ENCODE measurements at regions of chr20 and their contacts with region 1.

Region 1: GRCh38 chr20:10090588-10091166 is 55.9 kb downstream of the ANKEF1 start:
- DNase-seq: peak; percentile 58
- H3K4me3 ChIP-seq: no peak overlapping the region
- H3K27ac ChIP-seq: no peak overlapping the region
- H3K4me1 ChIP-seq: peaks cover 23% of the 10 kb centered on the region
- H3K27me3 ChIP-seq: no peaks in the 10 kb centered on the region
- CTCF ChIP-seq: peak; percentile 76 to 91

Region 2: DNA sequence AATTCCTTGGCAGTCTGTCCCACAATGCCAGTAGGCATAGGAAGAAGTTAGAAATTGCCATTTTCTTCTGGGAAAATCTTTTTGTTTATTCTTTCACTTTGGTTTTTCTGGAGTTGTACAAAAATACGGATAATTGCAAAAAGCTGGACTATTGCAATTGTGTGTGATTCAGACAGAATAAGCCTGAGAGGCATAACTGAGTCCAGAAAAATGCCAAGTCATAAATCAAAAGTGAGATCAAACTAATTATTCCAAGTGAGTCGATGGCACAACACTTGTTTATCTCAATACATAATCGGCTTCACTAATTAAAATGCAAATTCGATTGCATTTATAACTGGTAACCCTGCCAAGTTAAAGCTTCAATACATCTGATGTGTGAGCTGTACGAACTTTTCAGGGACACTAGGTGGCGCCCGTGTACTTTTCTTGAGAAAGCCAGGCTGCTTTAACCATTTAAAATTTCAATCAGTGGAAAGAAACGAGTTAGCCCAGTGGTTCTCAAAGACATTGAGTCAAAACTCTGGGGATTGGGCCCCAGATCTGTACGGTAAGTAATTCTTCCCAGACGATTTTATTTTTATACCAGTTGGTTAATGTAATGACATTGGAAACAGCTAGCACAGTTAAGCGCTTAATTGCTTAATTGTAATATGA is 473.7 kb before region 1 on chr20:
- CTCF ChIA-PET with region 1: interaction called, 3 read pairs
- dilution Hi-C with region 1: no loop called
- in situ Hi-C with region 1: no loop called
- intact Hi-C with region 1: loop called (anchors 1 kb)
- DNase-seq: peak; percentile 38
- H3K4me3 ChIP-seq: no peak overlapping the region
- H3K27ac ChIP-seq: no peak overlapping the region
- H3K4me1 ChIP-seq: no peaks in the 10 kb centered on the region
- H3K27me3 ChIP-seq: peaks cover 2% of the 10 kb centered on the region
- CTCF ChIP-seq: peak; percentile 76 to 81

Region 3: DNA sequence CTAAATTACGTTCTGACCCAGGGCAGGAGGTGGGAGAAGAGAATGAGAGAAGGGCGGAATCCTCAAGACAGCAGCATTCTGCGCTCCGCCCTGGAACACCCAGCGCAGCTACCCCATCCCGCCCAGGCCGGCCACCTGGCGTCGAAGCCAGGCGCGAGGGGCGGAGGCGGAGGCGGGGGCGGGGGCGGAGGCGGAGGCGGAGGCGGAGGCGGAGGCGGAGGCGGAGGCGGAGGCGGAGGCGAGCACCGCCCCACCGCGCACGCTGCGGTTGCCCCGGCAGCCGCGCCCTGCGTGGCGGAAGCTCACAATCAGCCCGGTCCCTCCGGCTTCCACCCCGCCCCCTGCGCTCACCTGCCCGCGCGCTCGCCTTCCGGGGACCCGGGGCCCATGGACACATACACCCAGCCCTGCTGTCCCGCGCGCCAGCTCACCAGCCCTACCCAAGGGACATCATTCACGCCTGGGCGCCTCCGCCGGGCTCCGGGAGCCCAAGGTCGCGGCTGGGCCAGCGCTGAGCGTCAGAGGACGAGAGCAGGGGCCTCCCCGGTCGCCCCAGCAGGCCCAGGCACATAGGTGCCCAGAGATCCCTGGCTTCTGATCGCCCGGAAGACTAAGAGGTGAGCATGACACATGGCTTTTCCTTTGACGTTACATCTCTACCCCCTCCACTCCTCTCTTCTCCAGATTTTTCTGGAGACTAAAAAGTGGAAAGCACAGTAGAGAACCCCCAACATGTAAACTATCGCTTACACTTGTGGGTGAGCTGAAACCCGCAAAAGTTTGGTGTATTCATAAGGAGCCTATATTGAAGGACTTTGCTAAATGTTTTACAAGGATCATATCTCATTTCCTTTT is 55.7 kb before region 1 on chr20 and contains the start of gene ANKEF1:
- CTCF ChIA-PET with region 1: no interaction called
- dilution Hi-C with region 1: no loop called
- in situ Hi-C with region 1: no loop called
- intact Hi-C with region 1: loop called (anchors 2 kb)
- DNase-seq: peak; percentile 71
- H3K4me3 ChIP-seq: peak within 1 kb of the TSS; percentile 40 to 74 (median 61)
- H3K27ac ChIP-seq: peak within 1 kb of the TSS; percentile 38
- H3K4me1 ChIP-seq: peaks cover 8% of the 10 kb centered on the region
- H3K27me3 ChIP-seq: no peaks in the 10 kb centered on the region
- CTCF ChIP-seq: no peak
- total RNA-seq, gene ANKEF1: 4.8 to 7.2 TPM

Region 4: GRCh38 chr20:10077081-10077471 is 13.6 kb before region 1 on chr20:
- CTCF ChIA-PET with region 1: interaction called, 19 read pairs
- dilution Hi-C with region 1: no loop called
- in situ Hi-C with region 1: no loop called
- intact Hi-C with region 1: no loop called
- DNase-seq: no peak
- H3K4me3 ChIP-seq: no peak overlapping the region
- H3K27ac ChIP-seq: peak overlapping the region; percentile 8
- H3K4me1 ChIP-seq: peaks cover 69% of the 10 kb centered on the region
- H3K27me3 ChIP-seq: no peaks in the 10 kb centered on the region
- CTCF ChIP-seq: peak; percentile 30 to 35

Region 5: GRCh38 chr20:10115021-10115420 is 24.3 kb after region 1 on chr20:
- CTCF ChIA-PET with region 1: no interaction called
- dilution Hi-C with region 1: no loop called
- in situ Hi-C with region 1: no loop called
- intact Hi-C with region 1: no loop called
- DNase-seq: peak; percentile 64
- H3K4me3 ChIP-seq: no peak overlapping the region
- H3K27ac ChIP-seq: no peak overlapping the region
- H3K4me1 ChIP-seq: peaks cover 36% of the 10 kb centered on the region
- H3K27me3 ChIP-seq: no peaks in the 10 kb centered on the region
- CTCF ChIP-seq: no peak

Region 6: DNA sequence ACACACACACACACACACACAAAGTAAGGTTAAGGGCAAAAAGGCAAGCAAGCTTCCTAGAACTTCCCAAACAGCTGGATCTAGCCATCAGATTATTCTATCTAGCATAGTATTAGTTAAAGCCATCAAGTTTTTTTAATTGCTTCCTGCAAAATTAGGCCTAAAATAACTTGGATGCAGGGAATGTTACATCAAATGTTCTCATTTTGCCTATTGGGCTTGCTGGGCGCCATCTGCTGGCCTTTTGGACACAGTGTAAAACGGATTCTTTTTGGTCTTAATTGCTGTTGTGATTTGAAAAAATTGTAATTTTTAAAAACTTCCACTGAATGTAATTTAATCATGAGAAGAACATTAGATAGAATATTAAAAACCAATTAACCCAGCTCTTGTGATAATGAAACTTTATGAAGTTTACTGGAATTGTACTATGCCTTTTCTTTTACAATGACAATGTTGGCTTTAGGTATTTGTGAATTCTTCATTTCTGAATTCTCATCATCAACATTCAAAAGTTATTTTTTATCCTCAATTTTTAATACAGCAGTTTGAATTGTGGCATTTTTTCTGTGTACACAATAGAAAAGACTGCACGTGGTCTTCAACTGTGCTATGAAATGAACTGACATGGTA is 336.5 kb after region 1 on chr20:
- CTCF ChIA-PET with region 1: no interaction called
- dilution Hi-C with region 1: no loop called
- in situ Hi-C with region 1: loop called (anchors 10 to 25 kb)
- intact Hi-C with region 1: loop called (anchors 1 kb)
- DNase-seq: peak; percentile 47
- H3K4me3 ChIP-seq: no peak overlapping the region
- H3K27ac ChIP-seq: no peak overlapping the region
- H3K4me1 ChIP-seq: peaks cover 18% of the 10 kb centered on the region
- H3K27me3 ChIP-seq: no peaks in the 10 kb centered on the region
- CTCF ChIP-seq: peak; percentile 79 to 90

Region 7: DNA sequence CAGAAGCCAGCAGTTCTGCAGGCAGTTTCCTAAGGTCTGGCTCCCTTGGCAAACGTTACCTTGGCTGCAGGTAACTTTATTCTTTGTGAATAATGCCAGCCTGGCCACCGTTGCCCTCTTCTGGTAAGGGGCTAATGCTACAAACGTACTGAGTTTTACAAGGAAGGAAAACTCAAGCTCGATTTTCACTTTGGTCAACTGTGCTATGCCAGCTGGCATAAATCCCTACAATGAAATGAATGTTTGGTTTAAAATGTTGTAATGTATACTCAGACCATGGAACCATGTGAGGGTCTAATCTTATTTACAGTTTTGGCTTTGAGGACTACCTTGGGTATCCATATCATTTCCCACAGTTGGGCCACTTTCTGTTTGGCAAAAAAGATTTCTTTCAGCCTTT is 445.9 kb after region 1 on chr20:
- CTCF ChIA-PET with region 1: no interaction called
- dilution Hi-C with region 1: no loop called
- in situ Hi-C with region 1: no loop called
- intact Hi-C with region 1: loop called (anchors 5 kb)
- DNase-seq: no peak
- H3K4me3 ChIP-seq: no peak overlapping the region
- H3K27ac ChIP-seq: no peak overlapping the region
- H3K4me1 ChIP-seq: peaks cover 28% of the 10 kb centered on the region
- H3K27me3 ChIP-seq: no peaks in the 10 kb centered on the region
- CTCF ChIP-seq: peak; percentile 51 to 76